WTC11 (cell line): ENCODE measurements at regions of chr1 and their contacts with region 1.

Region 1: DNA sequence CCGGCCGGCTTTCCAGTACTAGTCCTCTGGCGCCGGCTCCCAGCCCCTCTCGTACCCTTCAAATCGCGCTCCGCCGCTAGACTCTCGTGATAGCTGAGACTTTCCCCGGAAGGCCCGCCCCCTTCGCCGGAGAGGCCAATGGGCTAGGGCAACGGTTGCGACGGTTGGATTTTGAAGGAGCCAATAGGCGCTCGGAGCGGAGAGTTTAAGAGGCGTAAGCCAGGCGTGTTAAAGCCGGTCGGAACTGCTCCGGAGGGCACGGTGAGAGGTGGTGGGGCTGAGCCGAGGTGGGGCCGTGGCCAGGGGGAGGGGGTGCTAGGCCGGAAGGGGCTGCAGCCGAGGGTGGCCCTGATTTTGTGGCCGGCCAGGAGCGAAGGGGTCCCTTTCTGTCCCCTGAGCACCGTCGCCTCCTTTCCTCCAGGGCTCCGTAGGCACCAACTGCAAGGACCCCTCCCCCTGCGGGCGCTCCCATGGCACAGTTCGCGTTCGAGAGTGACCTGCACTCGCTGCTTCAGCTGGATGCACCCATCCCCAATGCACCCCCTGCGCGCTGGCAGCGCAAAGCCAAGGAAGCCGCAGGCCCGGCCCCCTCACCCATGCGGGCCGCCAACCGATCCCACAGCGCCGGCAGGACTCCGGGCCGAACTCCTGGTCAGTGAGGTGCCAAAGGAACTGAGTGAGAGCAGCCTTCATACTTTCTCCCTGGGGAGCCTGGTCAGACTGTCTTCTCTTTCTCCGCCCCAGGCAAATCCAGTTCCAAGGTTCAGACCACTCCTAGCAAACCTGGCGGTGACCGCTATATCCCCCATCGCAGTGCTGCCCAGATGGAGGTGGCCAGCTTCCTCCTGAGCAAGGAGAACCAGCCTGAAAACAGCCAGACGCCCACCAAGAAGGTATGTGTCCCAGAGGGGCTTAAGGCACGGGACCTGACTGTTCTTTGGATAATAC is at the start of gene CDC20:
- DNase-seq: peak; percentile 100
- ATAC-seq: peak; percentile 97
- H3K4me3 Mint-ChIP-seq: peak within 1 kb of the TSS; percentile 93
- H3K27ac Mint-ChIP-seq: peak within 1 kb of the TSS; percentile 99
- H3K4me1 Mint-ChIP-seq: peaks cover 29% of the 10 kb centered on the region
- H3K27me3 Mint-ChIP-seq: no peaks in the 10 kb centered on the region
- CTCF ChIP-seq: no peak
- total RNA-seq, gene CDC20: 246 to 280 TPM (median 265 TPM) in 3 replicates

Region 2: DNA sequence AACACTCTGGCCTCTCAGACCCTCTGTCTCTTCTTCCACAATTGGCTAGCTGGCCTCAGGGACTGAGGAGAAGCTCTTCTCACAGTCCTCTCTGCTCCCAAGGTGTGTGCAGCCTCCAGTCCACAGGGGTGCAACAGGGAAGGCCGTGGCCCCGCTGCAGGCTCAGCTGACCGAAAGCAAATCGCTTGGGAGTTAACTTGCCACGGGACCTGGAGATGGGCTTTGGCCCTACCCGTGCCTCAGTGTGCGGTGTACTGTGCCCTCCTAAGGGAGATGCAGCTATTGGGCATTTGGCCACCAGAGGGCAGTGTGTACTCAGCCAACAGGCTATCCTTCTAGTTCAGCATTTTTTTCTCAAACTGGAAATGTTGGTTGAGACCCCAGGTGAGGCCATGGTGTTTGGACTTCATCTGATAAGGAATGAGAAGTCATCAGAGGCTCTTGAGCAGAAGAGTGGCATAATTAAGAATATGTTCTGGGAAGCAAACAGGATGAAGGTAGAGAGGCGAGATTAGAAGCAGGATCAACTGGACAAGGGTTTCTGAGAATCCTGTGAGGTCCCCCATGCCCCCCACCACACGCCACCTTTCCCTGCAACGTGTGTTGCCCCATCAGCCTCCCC is 131.8 kb before region 1 on chr1:
- CTCF ChIA-PET with region 1: interaction called, 21 read pairs
- POLR2A ChIA-PET with region 1: interaction called, 6 read pairs
- DNase-seq: peak; percentile 96
- ATAC-seq: peak; percentile 96
- H3K4me3 Mint-ChIP-seq: no peak overlapping the region
- H3K27ac Mint-ChIP-seq: no peak overlapping the region
- H3K4me1 Mint-ChIP-seq: peaks cover 20% of the 10 kb centered on the region
- H3K27me3 Mint-ChIP-seq: peaks cover 3% of the 10 kb centered on the region; the same call in 1 of the 2 replicates
- CTCF ChIP-seq: peak; percentile 93

Region 3: DNA sequence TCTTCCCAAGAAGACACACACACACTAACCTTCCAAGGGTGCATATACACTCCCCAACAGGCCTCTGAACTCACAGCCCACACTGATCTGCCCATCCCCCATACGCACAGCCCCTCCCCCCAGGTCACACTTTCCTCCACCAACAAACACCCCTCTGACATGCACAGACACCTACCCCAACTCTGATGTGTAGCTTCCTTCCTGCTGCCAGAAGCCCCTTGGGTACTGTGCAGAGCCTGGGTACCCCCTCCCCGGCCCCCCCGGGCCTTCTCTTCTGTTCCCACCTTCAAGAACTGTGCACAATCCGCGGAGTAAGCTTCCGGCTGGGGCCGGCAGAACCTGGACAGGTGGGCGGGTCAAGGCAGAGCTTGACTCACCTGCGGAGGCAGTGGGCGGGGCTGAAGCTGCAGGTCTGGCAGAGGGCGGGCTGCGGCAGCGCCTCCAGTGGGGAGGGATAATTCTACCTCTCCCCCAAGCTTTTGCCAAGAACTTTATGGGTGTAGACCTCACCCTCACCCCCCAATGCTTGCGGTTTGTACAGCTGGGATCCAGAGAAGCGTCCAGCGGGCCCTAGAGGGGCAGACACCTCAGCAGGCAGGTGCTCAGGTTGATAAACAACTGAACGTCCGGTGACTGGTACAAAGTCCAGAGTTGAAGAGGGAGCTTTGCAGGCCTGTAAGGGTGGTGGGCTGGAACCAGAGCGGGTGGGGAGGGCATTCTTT is 73.6 kb before region 1 on chr1 and contains the start of gene C1orf210:
- CTCF ChIA-PET with region 1: interaction called, 37 read pairs
- POLR2A ChIA-PET with region 1: interaction called, 12 read pairs
- DNase-seq: peak; percentile 98
- ATAC-seq: peak; percentile 97
- H3K4me3 Mint-ChIP-seq: peak within 1 kb of the TSS; percentile 79
- H3K27ac Mint-ChIP-seq: peak within 1 kb of the TSS; percentile 94
- H3K4me1 Mint-ChIP-seq: peaks cover 34% of the 10 kb centered on the region
- H3K27me3 Mint-ChIP-seq: no peaks in the 10 kb centered on the region
- CTCF ChIP-seq: peak; percentile 39
- total RNA-seq, gene C1orf210: 11.7 to 14.0 TPM (median 12.8 TPM) in 3 replicates

Region 4: DNA sequence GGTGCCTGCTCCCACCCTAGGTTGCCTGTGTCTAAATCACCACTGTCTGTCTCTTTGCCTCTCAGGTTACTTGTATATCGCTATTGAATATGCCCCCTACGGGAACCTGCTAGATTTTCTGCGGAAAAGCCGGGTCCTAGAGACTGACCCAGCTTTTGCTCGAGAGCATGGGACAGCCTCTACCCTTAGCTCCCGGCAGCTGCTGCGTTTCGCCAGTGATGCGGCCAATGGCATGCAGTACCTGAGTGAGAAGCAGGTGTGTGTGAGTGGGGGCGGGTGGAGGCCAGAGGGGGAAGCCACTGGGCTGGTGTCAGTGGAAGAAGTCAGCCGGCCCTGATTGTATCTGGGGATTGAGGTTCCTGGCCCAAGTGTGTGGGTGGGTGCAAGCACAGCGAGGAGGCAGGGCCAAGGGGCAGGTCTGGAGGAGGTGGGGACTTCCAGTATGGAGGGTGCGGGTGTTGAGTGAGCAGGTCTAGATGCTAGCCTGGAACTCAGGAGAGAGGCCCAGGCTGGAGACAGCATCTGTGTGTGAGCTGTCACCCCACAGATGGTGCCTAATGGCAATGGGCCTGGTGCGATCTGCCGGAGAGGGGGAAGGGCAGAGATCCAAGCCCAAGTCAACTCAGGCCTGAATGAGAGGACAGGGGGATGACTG is 41.1 kb before region 1 on chr1:
- CTCF ChIA-PET with region 1: interaction called, 10 read pairs
- POLR2A ChIA-PET with region 1: no interaction called
- DNase-seq: no peak
- ATAC-seq: no peak
- H3K4me3 Mint-ChIP-seq: no peak overlapping the region
- H3K27ac Mint-ChIP-seq: peak overlapping the region; percentile 50; the same call in 1 of the 2 replicates
- H3K4me1 Mint-ChIP-seq: peaks cover 6% of the 10 kb centered on the region
- H3K27me3 Mint-ChIP-seq: no peaks in the 10 kb centered on the region
- CTCF ChIP-seq: no peak

Region 5: DNA sequence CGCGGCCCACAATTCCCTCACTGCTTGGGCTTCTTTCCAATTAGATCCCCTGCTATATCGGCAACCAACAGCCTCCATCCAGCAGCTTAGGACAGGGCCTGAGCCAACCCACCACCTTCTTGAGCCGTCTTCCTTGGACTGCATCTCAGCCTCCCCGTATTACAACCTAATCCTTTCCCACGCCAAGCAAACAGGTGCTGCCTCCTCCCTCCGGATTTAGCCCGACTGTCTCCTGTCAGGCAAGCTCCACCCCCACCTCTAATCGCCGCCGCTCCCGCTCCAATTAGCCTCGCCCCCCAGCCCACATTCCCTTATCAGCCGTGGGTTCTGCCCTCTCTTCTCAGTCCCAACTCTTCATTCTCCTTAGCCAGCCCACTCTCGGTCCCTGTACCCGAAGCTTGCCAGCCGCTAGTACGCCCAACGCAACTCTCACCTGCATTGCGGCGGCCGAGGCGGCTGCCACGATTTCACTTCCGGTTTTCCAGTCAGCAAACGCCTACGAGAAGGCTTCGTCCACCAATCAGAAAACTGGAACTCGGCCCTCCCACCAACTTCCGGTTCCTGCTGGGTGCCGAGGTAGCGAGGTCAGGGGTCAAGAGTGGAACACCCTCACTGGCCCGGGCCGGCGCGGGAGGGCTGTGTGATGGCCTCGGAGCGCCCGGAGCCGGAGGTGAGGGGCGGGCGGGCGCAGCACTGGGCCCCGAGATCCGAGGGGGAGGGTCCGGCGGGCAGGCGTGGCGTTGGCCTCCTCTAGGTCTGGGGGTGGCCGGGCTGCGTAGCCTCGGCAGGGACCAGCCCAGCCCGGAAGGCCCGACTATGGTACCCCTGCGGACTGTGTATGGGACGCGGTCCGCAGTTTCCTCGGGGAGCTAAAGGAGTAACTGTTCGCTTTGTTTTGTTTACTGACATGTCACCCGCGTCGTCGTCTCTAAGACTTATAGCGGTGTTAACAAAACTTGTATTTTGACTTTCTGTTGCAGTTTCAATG is 30.6 kb after region 1 on chr1 and contains the starts of genes MED8 and SZT2:
- CTCF ChIA-PET with region 1: interaction called, 8 read pairs
- POLR2A ChIA-PET with region 1: interaction called, 17 read pairs
- DNase-seq: peak; percentile 98
- ATAC-seq: peak; percentile 98
- H3K4me3 Mint-ChIP-seq: peak within 1 kb of the TSS; percentile 99
- H3K27ac Mint-ChIP-seq: peak within 1 kb of the TSS; percentile 99
- H3K4me1 Mint-ChIP-seq: peaks cover 19% of the 10 kb centered on the region
- H3K27me3 Mint-ChIP-seq: no peaks in the 10 kb centered on the region; the same call in 1 of the 2 replicates
- CTCF ChIP-seq: no peak
- total RNA-seq, gene MED8: 17.7 to 19.5 TPM (median 18.0 TPM) in 3 replicates
- total RNA-seq, gene SZT2: 20.2 to 28.4 TPM (median 21.5 TPM) in 3 replicates

Region 6: DNA sequence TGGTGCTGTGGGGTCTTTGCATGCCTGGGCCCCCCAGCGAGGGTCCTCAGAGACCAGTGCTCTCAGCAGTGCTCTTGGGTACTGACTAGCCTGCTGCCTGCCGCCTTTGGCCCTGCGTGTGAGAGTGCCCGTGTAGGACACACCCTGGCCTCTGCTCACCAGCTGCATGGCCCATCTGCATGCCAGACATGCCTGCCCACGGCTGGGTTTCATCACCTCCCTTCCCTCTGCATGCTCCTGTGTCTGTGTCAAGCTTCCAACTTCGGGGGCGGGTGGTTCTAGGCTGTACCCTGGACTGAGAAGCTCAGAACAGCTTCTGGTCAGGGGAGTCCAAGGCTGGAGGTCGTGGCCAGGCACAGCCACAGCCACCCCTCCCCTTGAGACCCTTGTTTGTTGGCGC is 228.6 kb after region 1 on chr1:
- CTCF ChIA-PET with region 1: no interaction called
- POLR2A ChIA-PET with region 1: no interaction called
- DNase-seq: no peak
- ATAC-seq: no peak
- H3K4me3 Mint-ChIP-seq: no peak overlapping the region
- H3K27ac Mint-ChIP-seq: peak overlapping the region; percentile 48; the same call in 1 of the 2 replicates
- H3K4me1 Mint-ChIP-seq: no peaks in the 10 kb centered on the region
- H3K27me3 Mint-ChIP-seq: no peaks in the 10 kb centered on the region
- CTCF ChIP-seq: no peak